Heart right ventricle (tissue), 16 donors: ENCODE measurements at regions of chr4 and their contacts with region 1.

Region 1: DNA sequence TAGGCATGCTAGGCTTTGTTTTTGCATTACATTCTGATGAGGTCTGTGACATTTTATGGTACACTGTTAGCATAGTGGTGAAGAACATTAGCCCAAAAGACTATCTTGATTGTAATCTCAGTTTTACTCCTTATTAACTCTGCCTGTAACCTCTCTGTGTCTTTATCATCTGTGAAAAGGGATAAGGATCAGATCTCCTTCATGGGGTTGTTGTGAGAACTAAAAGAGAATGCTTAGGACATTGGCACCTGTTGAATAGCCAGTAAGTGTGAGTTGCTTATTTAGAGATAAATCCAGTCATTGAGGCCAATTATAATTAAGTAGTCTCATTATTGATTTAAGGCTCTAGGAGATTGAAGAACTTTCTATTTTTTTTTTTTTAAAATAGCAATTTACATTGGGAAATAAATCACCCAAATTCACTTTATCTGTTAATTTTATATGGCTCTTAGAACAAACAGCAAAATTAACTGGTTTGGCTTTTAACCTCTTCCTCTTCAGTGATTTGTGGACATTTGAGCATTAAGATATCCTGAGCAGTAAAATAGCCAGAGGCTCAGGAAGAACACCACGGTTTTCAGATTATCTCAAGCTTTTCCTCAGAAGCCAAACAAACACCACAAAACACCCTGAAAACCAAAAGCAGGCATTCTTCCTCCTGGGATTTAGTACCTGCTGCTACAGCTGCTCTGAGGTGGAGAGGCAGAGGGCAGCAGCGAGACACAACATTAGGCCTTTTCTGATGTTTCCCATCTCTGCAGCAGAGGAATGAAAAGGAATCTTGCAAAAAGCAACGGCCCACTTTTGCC is 192.9 kb downstream of the ARHGAP10 start:
- DNase-seq: peak in 1 of 2 donors; percentile 19
- ATAC-seq: no peak
- H3K4me3 ChIP-seq: no peak overlapping the region
- H3K27ac ChIP-seq: no peak overlapping the region
- H3K4me1 ChIP-seq: peaks cover 0 to 30% (median 5%) of the 10 kb centered on the region in 9 donors
- H3K27me3 ChIP-seq: no peaks in the 10 kb centered on the region
- CTCF ChIP-seq: peak in 7 of 9 donors; percentile 36 to 67 (median 48)

Region 2: DNA sequence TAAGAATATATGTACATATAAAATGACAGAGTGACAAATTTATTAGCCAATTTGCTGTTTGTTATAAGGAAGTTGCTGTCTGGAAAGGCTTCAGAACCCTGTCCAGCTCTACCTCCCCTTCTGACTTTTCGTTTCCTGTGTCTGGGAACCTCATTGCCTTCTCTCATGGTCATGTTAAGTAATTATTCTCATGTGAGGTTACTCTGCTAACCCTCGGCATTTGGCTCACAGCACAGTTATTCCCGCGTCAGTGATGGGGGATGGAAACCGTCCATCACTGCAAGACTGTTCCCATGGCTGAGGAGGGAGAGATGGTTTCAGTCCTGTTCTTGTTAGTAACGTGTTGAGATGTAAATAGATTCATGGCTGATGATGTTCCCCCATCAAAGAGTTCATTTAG is 432.0 kb before region 1 on chr4:
- intact Hi-C with region 1: no loop called
- DNase-seq: peak; percentile 22 to 80
- ATAC-seq: peak; percentile 82 to 94 (median 90)
- H3K4me3 ChIP-seq: peak overlapping the region in 2 of 10 donors; percentile 4 to 28
- H3K27ac ChIP-seq: peak overlapping the region in 6 of 10 donors; percentile 26 to 72 (median 44)
- H3K4me1 ChIP-seq: peaks cover 0 to 76% (median 10%) of the 10 kb centered on the region in 9 donors
- H3K27me3 ChIP-seq: no peaks in the 10 kb centered on the region
- CTCF ChIP-seq: no peak

Region 3: GRCh38 chr4:147831551-147832177 is 93.1 kb before region 1 on chr4:
- intact Hi-C with region 1: no loop called
- DNase-seq: peak in 1 of 2 donors; percentile 29
- ATAC-seq: peak; percentile 20 to 81 (median 53)
- H3K4me3 ChIP-seq: no peak overlapping the region
- H3K27ac ChIP-seq: peak overlapping the region; percentile 73 to 93 (median 89)
- H3K4me1 ChIP-seq: peaks cover 15 to 79% (median 58%) of the 10 kb centered on the region in 9 donors
- H3K27me3 ChIP-seq: no peaks in the 10 kb centered on the region
- CTCF ChIP-seq: no peak

Region 4: DNA sequence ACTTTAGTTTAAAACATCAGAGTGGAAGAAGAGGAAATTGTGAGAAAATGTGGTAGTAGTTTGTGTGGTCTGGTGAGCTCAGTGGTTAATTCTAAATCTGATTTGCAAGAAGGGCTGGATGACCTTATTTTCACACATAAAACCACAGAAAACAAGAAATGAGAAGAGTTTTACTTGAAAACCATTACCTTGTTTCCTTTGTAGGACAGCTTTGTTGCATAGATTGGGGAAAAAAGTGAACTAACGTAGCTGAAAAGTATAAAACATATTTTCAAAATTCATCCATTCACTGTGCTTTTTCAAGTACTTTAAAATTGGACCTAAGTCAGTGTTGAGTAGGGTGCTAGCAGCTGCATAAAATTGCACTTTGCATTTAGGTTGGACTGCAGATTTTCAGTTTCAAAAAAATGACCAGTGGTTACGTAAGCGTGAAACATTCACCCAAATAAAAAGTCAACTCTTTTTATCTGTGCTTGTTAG is 18.4 kb after region 1 on chr4:
- intact Hi-C with region 1: no loop called
- DNase-seq: no peak
- ATAC-seq: no peak
- H3K4me3 ChIP-seq: no peak overlapping the region
- H3K27ac ChIP-seq: peak overlapping the region in 2 of 10 donors; percentile 8 to 45
- H3K4me1 ChIP-seq: peaks cover 0 to 36% (median 27%) of the 10 kb centered on the region in 9 donors
- H3K27me3 ChIP-seq: no peaks in the 10 kb centered on the region
- CTCF ChIP-seq: no peak

Region 5: GRCh38 chr4:148225639-148226038 is 300.8 kb after region 1 on chr4:
- intact Hi-C with region 1: no loop called
- DNase-seq: no peak
- ATAC-seq: no peak
- H3K4me3 ChIP-seq: no peak overlapping the region
- H3K27ac ChIP-seq: no peak overlapping the region
- H3K4me1 ChIP-seq: peaks cover 0 to 38% (median 13%) of the 10 kb centered on the region in 9 donors
- H3K27me3 ChIP-seq: no peaks in the 10 kb centered on the region
- CTCF ChIP-seq: no peak

Region 6: DNA sequence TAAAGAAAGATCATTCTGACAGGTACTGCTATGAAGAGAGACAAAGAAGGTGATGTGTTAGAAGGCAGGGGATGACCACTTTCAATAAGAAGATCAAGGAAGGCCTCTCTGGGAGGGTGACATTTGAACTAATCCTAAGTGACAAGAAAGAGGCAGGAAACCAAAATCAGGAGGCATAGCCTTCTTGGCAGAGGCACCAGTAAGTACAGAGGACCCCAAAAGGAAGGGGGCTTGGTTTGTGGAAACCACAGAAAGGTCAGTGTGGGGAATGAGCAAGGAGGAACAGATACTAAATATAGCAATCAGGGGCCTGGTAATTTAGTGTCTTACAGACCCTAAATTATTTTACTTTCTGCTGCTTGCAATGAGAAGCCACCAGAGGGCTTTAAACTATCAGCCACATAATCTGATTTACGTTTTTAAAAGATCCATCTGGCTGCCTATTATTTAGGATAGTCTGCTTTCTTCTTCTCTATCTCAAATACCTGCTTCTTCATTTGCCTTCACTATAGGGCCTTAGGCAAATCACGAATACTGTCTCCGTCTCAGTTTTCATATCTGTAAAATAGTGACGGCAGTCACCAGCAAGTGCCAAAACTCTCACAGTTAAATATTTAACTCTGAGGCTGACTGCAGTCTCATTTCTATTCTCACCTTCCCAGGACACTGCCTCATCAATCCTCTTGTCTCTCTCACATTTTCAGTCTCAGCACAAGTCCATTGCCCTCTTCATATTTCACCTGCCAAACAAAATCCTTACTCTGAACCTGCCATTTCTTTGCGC is 500.7 kb after region 1 on chr4:
- intact Hi-C with region 1: loop called in 1 of 10 experiments (anchors 10 kb)
- DNase-seq: no peak
- ATAC-seq: no peak
- H3K4me3 ChIP-seq: no peak overlapping the region
- H3K27ac ChIP-seq: no peak overlapping the region
- H3K4me1 ChIP-seq: peaks cover 0 to 60% (median 20%) of the 10 kb centered on the region in 9 donors
- H3K27me3 ChIP-seq: no peaks in the 10 kb centered on the region
- CTCF ChIP-seq: peak in 2 of 9 donors; percentile 8 to 14